HAP-1 (cell line): ENCODE measurements at regions of chr3 and their contacts with region 1.

Region 1: GRCh38 chr3:4290272-4290893 is 12.8 kb upstream of the SETMAR start:
- DNase-seq: peak; percentile 34 to 57
- H3K4me3 ChIP-seq: no peak overlapping the region
- H3K4me1 ChIP-seq: peaks cover 6% of the 10 kb centered on the region
- H3K27me3 ChIP-seq: peaks cover 9% of the 10 kb centered on the region; the same call in 1 of the 2 replicates

Region 2: GRCh38 chr3:3200632-3201212 is 1089.7 kb before region 1 on chr3:
- in situ Hi-C with region 1: loop called (anchors 10 kb)
- DNase-seq: peak; percentile 47 to 64
- H3K4me3 ChIP-seq: no peak overlapping the region
- H3K4me1 ChIP-seq: no peaks in the 10 kb centered on the region
- H3K27me3 ChIP-seq: 0 out of 2 replicates have a peak, but pooled peaks cover 2% of the 10 kb centered on the region

Region 3: GRCh38 chr3:3799173-3800079 is 491.0 kb before region 1 on chr3 and contains the start of gene LRRN1:
- in situ Hi-C with region 1: loop called (anchors 25 kb)
- DNase-seq: peak; percentile 60 to 90
- H3K4me3 ChIP-seq: peak within 1 kb of the TSS; percentile 57
- H3K4me1 ChIP-seq: peaks cover 27% of the 10 kb centered on the region
- H3K27me3 ChIP-seq: no peaks in the 10 kb centered on the region

Region 4: GRCh38 chr3:4091786-4092185 is 198.6 kb before region 1 on chr3:
- in situ Hi-C with region 1: no loop called
- DNase-seq: no peak
- H3K4me3 ChIP-seq: no peak overlapping the region
- H3K4me1 ChIP-seq: no peaks in the 10 kb centered on the region
- H3K27me3 ChIP-seq: no peaks in the 10 kb centered on the region

Region 5: DNA sequence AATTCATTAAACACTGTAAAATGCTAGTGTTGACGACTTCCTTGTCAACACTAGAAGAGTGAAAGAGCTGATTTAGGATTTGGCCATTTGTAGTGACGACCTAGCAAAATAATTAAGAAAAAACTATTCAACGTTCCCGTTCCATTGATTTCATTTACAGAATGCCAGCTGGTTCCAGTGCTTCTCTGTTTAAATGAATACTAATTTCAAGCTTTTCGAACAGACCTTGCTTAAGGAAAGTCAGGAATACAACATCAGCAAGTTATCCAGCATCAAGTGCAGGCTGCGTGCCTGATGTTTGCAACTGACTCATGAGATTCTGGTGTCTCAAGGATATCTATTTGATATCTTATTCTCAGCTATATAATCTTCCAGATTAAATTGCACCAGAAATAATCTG is 590.5 kb after region 1 on chr3:
- in situ Hi-C with region 1: no loop called
- DNase-seq: no peak
- H3K4me3 ChIP-seq: no peak overlapping the region
- H3K4me1 ChIP-seq: peaks cover 4% of the 10 kb centered on the region
- H3K27me3 ChIP-seq: no peaks in the 10 kb centered on the region

Region 6: DNA sequence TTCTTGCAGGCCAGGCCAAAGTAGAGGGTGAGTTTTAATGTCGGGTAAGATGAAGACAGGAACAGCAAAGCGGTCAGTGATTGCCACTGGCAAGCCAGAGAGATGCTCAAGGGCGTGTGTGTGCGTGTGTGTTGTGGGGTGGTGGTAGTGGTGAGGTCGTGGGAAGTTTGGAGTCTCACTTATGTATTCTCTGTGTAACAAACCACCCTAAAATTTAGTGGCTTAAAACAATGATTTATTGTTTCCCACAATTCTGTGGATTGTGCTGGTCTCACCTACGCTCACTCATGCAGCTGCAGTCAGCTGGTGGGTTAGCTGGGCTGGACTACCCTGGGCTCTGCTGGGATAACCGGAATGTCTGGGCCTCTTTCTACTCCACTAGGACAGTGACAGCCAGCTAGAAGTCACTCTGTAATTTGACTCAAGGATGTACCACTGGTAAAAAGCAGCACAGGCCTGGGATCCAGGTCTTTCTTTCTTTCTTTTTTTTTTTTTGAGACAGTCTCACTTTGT is 638.0 kb after region 1 on chr3:
- in situ Hi-C with region 1: no loop called
- DNase-seq: no peak
- H3K4me3 ChIP-seq: no peak overlapping the region
- H3K4me1 ChIP-seq: no peaks in the 10 kb centered on the region
- H3K27me3 ChIP-seq: no peaks in the 10 kb centered on the region